ENCODE measurements at regions of chr3 and their contacts with region 1.

Region 1: DNA sequence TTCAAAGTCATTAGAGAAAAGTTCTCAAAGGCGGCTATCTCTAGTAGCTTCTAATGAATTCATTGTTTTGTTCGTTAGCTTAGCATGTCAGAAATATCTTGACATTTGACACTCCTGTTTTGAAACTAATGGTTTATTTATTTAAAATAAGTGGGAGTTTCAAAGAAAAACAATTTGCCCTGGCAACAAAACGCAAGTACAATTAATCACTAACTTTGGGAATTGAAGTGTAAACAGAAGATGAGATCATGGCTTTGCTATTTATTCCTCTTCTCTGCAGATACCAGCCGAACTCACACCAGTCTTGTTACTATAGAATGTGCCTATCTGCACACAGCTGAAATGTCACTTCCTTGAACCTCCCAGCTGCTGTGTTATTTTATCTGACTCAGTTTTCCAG is 27.5 kb downstream of the MASP1 start:
- DNase-seq: peak; percentile 57
- H3K4me3 ChIP-seq: no peak overlapping the region
- H3K27ac ChIP-seq: no peak overlapping the region
- H3K27me3 ChIP-seq: no peaks in the 10 kb centered on the region
- CTCF ChIP-seq: no peak

Region 2: DNA sequence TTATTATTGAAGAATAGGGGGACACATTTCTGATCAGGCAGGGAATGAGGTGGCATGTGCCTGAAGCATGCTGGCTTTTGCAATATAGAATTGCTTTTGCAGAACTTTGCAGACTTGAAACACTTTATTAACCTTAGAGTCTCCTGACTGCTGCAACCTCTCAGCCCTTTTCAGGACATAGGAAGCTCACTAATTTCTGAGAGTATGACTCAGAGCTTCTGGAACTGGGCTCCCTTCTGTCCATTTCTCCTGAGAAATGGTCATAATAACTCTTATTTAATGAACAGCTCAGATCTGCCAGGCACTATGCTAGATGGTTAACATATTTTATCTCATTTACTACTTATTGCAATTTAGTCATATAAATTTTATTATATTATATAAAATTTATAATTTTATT is 863.4 kb before region 1 on chr3:
- CTCF ChIA-PET with region 1: no interaction called
- POLR2A ChIA-PET with region 1: no interaction called
- DNase-seq: no peak
- H3K4me3 ChIP-seq: no peak overlapping the region
- H3K27ac ChIP-seq: no peak overlapping the region
- H3K27me3 ChIP-seq: no peaks in the 10 kb centered on the region
- CTCF ChIP-seq: no peak

Region 3: GRCh38 chr3:187281191-187281714 is 17.2 kb after region 1 on chr3:
- CTCF ChIA-PET with region 1: interaction called, 6 read pairs
- POLR2A ChIA-PET with region 1: interaction called, 16 read pairs
- DNase-seq: peak; percentile 92
- H3K4me3 ChIP-seq: no peak overlapping the region
- H3K27ac ChIP-seq: peak overlapping the region; percentile 87
- H3K27me3 ChIP-seq: no peaks in the 10 kb centered on the region
- CTCF ChIP-seq: peak; percentile 52

Region 4: GRCh38 chr3:187403768-187404270 is 139.8 kb after region 1 on chr3:
- CTCF ChIA-PET with region 1: no interaction called
- POLR2A ChIA-PET with region 1: no interaction called
- DNase-seq: peak; percentile 86
- H3K4me3 ChIP-seq: no peak overlapping the region
- H3K27ac ChIP-seq: peak overlapping the region; percentile 80
- H3K27me3 ChIP-seq: no peaks in the 10 kb centered on the region
- CTCF ChIP-seq: no peak

Region 5: DNA sequence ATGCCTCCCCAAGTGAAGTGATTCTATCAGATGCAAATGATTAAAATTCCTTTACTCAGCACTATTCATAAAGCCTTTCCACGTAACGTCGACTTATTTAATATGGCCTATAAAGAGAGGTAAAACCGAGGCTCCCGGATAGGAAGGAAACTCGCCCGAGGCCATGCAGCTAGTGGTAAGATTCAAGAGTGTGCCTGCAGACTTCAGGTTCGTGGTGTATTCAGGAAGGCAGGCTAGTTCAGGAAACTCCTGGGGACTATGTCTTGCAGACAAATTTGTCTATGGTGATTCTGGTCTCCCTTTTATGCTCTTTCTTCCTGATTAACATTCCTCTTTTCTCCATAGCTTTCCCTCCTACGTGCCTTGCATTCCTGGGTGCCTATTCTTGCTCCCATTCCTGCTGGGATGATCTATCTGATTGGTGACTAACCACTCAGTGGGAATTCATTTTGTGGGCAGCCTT is 255.4 kb after region 1 on chr3:
- CTCF ChIA-PET with region 1: no interaction called
- POLR2A ChIA-PET with region 1: no interaction called
- DNase-seq: no peak
- H3K4me3 ChIP-seq: no peak overlapping the region
- H3K27ac ChIP-seq: no peak overlapping the region
- H3K27me3 ChIP-seq: no peaks in the 10 kb centered on the region
- CTCF ChIP-seq: no peak